Esophagus muscularis mucosa (tissue), 4 donors: ENCODE measurements at regions of chr7 and their contacts with region 1.

Region 1: GRCh38 chr7:50369143-50370026 is 64.9 kb downstream of the IKZF1 start:
- DNase-seq: no peak
- H3K4me3 ChIP-seq: no peak overlapping the region
- H3K27ac ChIP-seq: no peak overlapping the region
- H3K4me1 ChIP-seq: no peaks in the 10 kb centered on the region
- H3K27me3 ChIP-seq: no peaks in the 10 kb centered on the region
- CTCF ChIP-seq: peak in 2 of 3 experiments; percentile 21 to 24
- EP300 ChIP-seq: no peak
- POLR2A ChIP-seq: no peak

Region 2: DNA sequence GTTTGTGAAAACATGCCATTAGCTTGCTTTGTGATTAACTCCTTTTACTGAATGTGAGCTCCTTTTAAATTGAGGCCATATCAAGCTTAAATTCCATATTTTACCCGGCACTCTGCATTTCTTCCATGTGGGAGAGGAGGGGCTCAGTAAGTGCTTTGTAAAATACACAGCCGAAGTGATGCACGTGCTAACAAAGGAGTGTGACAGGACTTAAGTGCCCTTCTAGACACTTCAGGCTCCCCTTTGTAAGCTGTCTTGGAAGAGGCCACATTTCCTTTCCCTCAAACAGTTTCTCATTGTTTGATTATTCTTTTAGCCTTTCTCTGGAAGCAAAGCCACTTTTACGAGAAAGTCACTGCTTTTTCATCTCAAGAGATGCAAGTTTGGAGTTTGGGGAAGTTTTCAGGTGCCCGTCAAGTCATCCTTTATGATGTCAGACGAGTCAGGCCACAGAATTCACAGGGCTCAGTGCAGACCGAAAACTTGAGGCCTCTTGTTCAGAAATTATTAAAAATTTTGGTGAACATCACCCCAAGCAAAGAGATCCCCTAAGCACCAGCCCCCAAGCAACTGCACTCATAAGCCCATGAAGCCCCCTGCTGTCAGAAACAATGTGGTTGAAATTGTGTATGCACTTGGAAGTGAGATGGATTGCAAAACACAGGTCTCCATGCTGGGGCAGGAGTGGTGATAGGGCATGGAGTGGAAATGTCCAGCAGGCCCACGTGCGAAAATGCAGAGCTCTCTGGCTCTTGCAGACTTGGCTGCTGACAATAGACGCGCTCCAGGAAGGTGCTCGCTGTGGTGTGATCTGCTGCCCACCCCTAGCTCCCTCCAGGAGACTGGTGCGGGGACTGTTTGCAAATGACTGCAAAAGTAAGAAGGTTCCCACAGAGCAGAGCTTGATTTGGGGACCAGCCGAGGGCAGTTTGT is 53.4 kb before region 1 on chr7:
- intact Hi-C with region 1: loop called (anchors 2 kb)
- DNase-seq: no peak
- H3K4me3 ChIP-seq: no peak overlapping the region
- H3K27ac ChIP-seq: no peak overlapping the region
- H3K4me1 ChIP-seq: no peaks in the 10 kb centered on the region
- H3K27me3 ChIP-seq: peaks cover 0 to 5% (median 0%) of the 10 kb centered on the region in 4 donors
- CTCF ChIP-seq: no peak
- EP300 ChIP-seq: no peak
- POLR2A ChIP-seq: no peak

Region 3: GRCh38 chr7:50335795-50336754 is 33.3 kb before region 1 on chr7:
- intact Hi-C with region 1: no loop called
- DNase-seq: no peak
- H3K4me3 ChIP-seq: no peak overlapping the region
- H3K27ac ChIP-seq: no peak overlapping the region
- H3K4me1 ChIP-seq: no peaks in the 10 kb centered on the region
- H3K27me3 ChIP-seq: peaks cover 0 to 21% (median 0%) of the 10 kb centered on the region in 4 donors
- CTCF ChIP-seq: no peak
- EP300 ChIP-seq: no peak
- POLR2A ChIP-seq: no peak